IMR-90 (cell line): ENCODE measurements at regions of chr13 and their contacts with region 1.

Region 1: DNA sequence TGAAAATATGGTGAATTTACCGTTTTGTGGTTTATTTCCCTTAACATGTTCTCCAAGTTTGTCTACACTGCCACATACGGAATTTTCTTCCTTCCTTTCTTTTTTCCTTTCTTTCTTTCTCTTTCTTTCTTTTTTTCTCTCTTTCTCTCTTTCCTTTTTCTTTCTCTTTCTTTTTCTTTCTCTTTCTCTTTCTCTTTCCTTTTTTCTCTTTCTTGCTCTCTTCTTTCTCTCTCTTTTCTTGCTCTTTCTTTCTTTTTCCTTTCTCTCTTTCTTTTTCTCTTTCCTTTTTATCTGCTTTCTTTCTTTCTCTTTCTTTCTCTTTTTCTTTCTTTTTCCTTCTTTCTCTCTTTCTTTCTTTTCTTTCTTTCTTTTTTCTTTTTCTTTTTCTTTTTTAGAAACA is 1962.3 kb upstream of the PCDH20 start:
- DNase-seq: no peak
- ATAC-seq: no peak
- H3K4me3 ChIP-seq: no peak overlapping the region
- H3K27ac ChIP-seq: no peak overlapping the region
- H3K4me1 ChIP-seq: no peaks in the 10 kb centered on the region
- H3K27me3 ChIP-seq: no peaks in the 10 kb centered on the region
- CTCF ChIP-seq: no peak
- POLR2A ChIP-seq: no peak
- RAD21 ChIP-seq: no peak

Region 2: GRCh38 chr13:63409791-63410351 is 31.9 kb after region 1 on chr13:
- CTCF ChIA-PET with region 1: no interaction called
- POLR2A ChIA-PET with region 1: no interaction called
- dilution Hi-C with region 1: no loop called
- in situ Hi-C with region 1: no loop called
- intact Hi-C with region 1: loop called (anchors 1 kb)
- DNase-seq: no peak
- ATAC-seq: no peak
- H3K4me3 ChIP-seq: no peak overlapping the region
- H3K27ac ChIP-seq: no peak overlapping the region
- H3K4me1 ChIP-seq: peaks cover 1% of the 10 kb centered on the region; the same call in 1 of the 2 replicates
- H3K27me3 ChIP-seq: no peaks in the 10 kb centered on the region
- CTCF ChIP-seq: no peak
- POLR2A ChIP-seq: no peak
- RAD21 ChIP-seq: no peak

Region 3: GRCh38 chr13:63643543-63643942 is 265.6 kb after region 1 on chr13:
- CTCF ChIA-PET with region 1: no interaction called
- POLR2A ChIA-PET with region 1: no interaction called
- dilution Hi-C with region 1: no loop called
- in situ Hi-C with region 1: no loop called
- intact Hi-C with region 1: no loop called
- DNase-seq: peak; percentile 65
- ATAC-seq: peak; percentile 91
- H3K4me3 ChIP-seq: no peak overlapping the region
- H3K27ac ChIP-seq: no peak overlapping the region
- H3K4me1 ChIP-seq: peaks cover 3% of the 10 kb centered on the region; the same call in 1 of the 2 replicates
- H3K27me3 ChIP-seq: no peaks in the 10 kb centered on the region
- CTCF ChIP-seq: no peak
- POLR2A ChIP-seq: no peak
- RAD21 ChIP-seq: no peak